ENCODE measurements at regions of chr17 and their contacts with region 1.

Region 1: GRCh38 chr17:64648234-64648633 is 13.9 kb downstream of the SMURF2 start:
- DNase-seq: no peak
- ATAC-seq: no peak
- H3K4me3 ChIP-seq: no peak overlapping the region
- H3K27ac ChIP-seq: no peak overlapping the region
- H3K4me1 ChIP-seq: peaks cover 7% of the 10 kb centered on the region
- H3K27me3 ChIP-seq: no peaks in the 10 kb centered on the region
- CTCF ChIP-seq: no peak
- EP300 ChIP-seq: no peak
- POLR2A ChIP-seq: no peak
- RAD21 ChIP-seq: no peak

Region 2: DNA sequence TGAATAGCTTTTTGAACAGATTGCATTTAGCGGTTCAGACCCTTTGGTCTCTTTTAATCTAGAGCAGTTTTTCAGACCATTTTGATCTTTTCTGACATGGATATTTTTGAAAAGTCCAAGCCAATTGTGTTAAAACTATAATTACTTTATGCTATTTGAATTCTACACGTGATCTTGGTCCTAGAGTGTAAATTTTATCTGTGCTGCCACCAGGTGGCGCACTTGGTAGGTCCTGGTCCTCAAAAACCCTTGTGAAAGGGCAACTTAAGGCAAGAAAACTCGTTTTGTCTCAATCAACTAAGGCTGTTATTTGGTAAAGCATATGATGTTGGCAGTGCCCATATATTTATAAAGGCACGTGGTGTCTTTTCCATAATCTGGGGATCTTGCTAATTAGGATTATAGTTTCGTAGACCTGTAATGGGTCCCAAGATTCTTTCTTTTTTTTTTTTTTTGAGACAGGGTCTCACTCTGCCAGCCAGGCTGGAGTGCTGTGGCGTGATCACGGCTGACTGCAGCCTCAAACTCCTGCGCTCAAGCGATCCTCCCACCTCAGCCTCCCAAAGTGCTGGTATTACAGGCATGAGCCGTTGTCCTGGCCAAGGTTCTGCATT is 341.3 kb before region 1 on chr17:
- CTCF ChIA-PET with region 1: no interaction called
- POLR2A ChIA-PET with region 1: interaction called, 4 read pairs
- RAD21 ChIA-PET with region 1: no interaction called
- SMC1A ChIA-PET with region 1: interaction called, 5 read pairs
- in situ Hi-C with region 1: no loop called
- intact Hi-C with region 1: loop called (anchors 5 kb)
- DNase-seq: no peak
- ATAC-seq: peak; percentile 83
- H3K4me3 ChIP-seq: no peak overlapping the region
- H3K27ac ChIP-seq: no peak overlapping the region
- H3K4me1 ChIP-seq: no peaks in the 10 kb centered on the region
- H3K27me3 ChIP-seq: no peaks in the 10 kb centered on the region
- CTCF ChIP-seq: peak; percentile 64 to 86 (median 84)
- EP300 ChIP-seq: no peak
- POLR2A ChIP-seq: no peak
- RAD21 ChIP-seq: peak; percentile 68

Region 3: GRCh38 chr17:64506576-64507477 is 141.4 kb before region 1 on chr17 and contains the start of gene CEP95:
- CTCF ChIA-PET with region 1: interaction called, 10 read pairs
- POLR2A ChIA-PET with region 1: interaction called, 4 read pairs
- RAD21 ChIA-PET with region 1: interaction called, 7 read pairs
- SMC1A ChIA-PET with region 1: interaction called, 10 read pairs
- in situ Hi-C with region 1: loop called (anchors 10 kb)
- intact Hi-C with region 1: loop called (anchors 2 kb)
- DNase-seq: peak; percentile 90
- ATAC-seq: peak; percentile 75
- H3K4me3 ChIP-seq: peak within 1 kb of the TSS; percentile 100
- H3K27ac ChIP-seq: peak within 1 kb of the TSS; percentile 100
- H3K4me1 ChIP-seq: peaks cover 4% of the 10 kb centered on the region; the same call in 1 of the 2 replicates
- H3K27me3 ChIP-seq: no peaks in the 10 kb centered on the region
- CTCF ChIP-seq: no peak
- EP300 ChIP-seq: 0 out of 4 replicates have a peak, but pooled peaks have one; percentile 9 to 20
- POLR2A ChIP-seq: peak; percentile 90
- RAD21 ChIP-seq: no peak
- polyA plus RNA-seq, gene CEP95: 17.7 to 22.6 TPM

Region 4: GRCh38 chr17:64555281-64555680 is 93.0 kb before region 1 on chr17:
- CTCF ChIA-PET with region 1: interaction called, 3 read pairs
- POLR2A ChIA-PET with region 1: no interaction called
- RAD21 ChIA-PET with region 1: no interaction called
- SMC1A ChIA-PET with region 1: no interaction called
- in situ Hi-C with region 1: no loop called
- intact Hi-C with region 1: loop called (anchors 5 kb)
- DNase-seq: no peak
- ATAC-seq: no peak
- H3K4me3 ChIP-seq: no peak overlapping the region
- H3K27ac ChIP-seq: no peak overlapping the region
- H3K4me1 ChIP-seq: no peaks in the 10 kb centered on the region
- H3K27me3 ChIP-seq: no peaks in the 10 kb centered on the region
- CTCF ChIP-seq: no peak
- EP300 ChIP-seq: no peak
- POLR2A ChIP-seq: no peak
- RAD21 ChIP-seq: no peak

Region 5: GRCh38 chr17:64635647-64636307 is 12.5 kb before region 1 on chr17:
- CTCF ChIA-PET with region 1: interaction called, 13 read pairs
- POLR2A ChIA-PET with region 1: interaction called, 4 read pairs
- RAD21 ChIA-PET with region 1: interaction called, 5 read pairs
- SMC1A ChIA-PET with region 1: interaction called, 19 read pairs
- in situ Hi-C with region 1: no loop called
- intact Hi-C with region 1: no loop called
- DNase-seq: peak; percentile 62
- ATAC-seq: peak; percentile 88
- H3K4me3 ChIP-seq: no peak overlapping the region
- H3K27ac ChIP-seq: peak overlapping the region; percentile 63
- H3K4me1 ChIP-seq: peaks cover 21% of the 10 kb centered on the region
- H3K27me3 ChIP-seq: no peaks in the 10 kb centered on the region
- CTCF ChIP-seq: no peak
- EP300 ChIP-seq: peak; percentile 90; a peak in 3 of 4 replicates
- POLR2A ChIP-seq: no peak
- RAD21 ChIP-seq: no peak